ENCODE measurements at regions of chr9 and their contacts with region 1.

Region 1: GRCh38 chr9:136439550-136440408 is at the start of gene INPP5E:
- DNase-seq: peak; percentile 86
- ATAC-seq: peak; percentile 90
- total RNA-seq, gene INPP5E: 10.8 TPM

Region 2: DNA sequence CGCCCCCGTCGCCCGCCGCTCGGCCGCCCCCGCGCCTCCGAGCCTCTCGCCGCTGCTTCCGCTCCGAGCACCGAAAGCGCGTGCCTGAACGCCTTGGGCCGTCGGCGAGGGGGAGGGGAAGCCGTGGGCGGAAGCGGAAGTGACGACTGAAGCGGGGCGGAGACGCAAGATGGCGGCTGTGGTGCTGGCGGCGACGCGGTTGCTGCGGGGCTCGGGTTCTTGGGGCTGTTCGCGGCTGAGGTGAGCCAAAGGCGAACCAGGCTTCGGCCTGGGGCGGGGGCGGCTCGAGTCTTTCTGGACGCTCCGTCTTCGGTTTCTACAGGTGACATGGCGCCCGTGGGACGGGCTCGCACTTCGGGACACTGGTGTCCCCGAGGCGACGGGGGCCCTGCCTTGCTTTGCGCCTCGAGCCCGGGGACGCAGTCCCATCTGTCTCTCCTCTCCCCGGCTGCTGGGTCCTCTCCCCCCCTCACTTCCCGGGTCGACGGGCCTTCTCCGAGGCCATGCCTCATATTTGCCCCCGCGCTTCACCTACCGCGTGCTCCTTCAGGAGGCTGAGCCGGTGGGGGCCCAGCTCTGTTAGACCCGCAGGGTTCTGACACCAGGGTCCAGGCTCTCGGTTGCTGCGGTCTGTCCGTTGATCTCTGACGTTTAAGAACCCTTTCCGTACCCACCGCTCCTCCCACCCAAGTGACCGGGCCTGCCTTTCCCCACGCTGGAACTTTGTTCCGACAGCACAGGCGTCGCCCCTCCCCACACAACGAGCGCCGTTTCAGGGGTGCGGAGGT is 29.1 kb before region 1 on chr9 and contains the starts of genes ENTR1 and PMPCA:
- intact Hi-C with region 1: loop called (anchors 2 kb)
- DNase-seq: peak; percentile 95
- ATAC-seq: peak; percentile 88
- total RNA-seq, gene ENTR1: 23.7 TPM
- total RNA-seq, gene PMPCA: 71.8 TPM